ENCODE measurements at regions of chr9 and their contacts with region 1.

Region 1: GRCh38 chr9:90870621-90871326 is 69.2 kb downstream of the SYK start:
- DNase-seq: no peak
- H3K4me3 ChIP-seq: no peak overlapping the region
- H3K27ac ChIP-seq: no peak overlapping the region
- H3K4me1 ChIP-seq: no peaks in the 10 kb centered on the region
- H3K27me3 ChIP-seq: no peaks in the 10 kb centered on the region
- CTCF ChIP-seq: peak; percentile 89

Region 2: DNA sequence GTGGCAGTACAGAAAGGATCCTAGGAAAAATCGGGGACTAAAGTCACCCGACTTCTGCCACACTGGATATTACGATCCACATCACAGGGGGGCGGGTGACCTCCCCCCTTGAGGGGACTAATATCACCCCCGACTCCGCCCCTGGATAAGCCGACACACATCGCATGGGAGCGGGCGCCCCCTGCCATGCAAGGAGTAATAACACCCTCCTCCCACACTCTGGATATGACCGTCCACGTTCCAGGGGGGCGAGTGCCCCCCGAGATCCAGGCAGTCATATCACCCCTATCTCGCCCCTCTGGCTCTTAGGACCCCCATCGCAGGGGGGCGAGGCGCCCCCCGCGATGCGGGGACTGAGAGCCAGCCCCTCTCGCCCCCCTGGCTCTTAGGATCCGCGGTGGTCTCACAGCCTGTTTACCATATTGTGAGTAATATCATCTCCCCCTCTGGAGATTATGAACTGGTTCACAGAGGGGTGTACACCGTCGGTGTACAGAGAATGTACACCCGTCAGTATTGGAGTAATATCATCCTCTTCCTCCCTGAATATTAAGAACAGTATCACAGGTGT is 651.1 kb before region 1 on chr9:
- intact Hi-C with region 1: loop called (anchors 10 kb)
- DNase-seq: no peak
- H3K4me3 ChIP-seq: no peak overlapping the region
- H3K27ac ChIP-seq: no peak overlapping the region
- H3K4me1 ChIP-seq: no peaks in the 10 kb centered on the region
- H3K27me3 ChIP-seq: peaks cover 24% of the 10 kb centered on the region
- CTCF ChIP-seq: peak; percentile 55

Region 3: DNA sequence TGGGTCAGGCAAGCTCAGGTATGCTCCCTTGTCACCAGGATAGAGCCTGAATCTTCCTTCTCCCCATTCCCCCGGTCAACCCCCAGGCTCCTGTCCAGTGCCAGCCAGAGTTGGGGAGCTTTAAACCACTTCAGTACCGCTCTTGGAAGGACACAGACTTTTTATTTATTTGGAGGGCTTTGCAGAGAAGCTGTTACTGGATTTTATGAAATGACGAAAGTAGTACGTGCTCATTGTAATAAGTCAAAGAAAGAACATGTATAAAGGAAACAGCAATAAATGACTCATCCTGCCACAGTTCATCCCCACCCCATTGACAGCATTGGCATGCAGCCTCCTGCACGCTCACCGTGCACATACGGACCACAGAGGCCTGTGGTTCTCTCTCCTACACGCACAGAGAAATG is 260.7 kb after region 1 on chr9:
- intact Hi-C with region 1: no loop called
- DNase-seq: no peak
- H3K4me3 ChIP-seq: no peak overlapping the region
- H3K27ac ChIP-seq: no peak overlapping the region
- H3K4me1 ChIP-seq: no peaks in the 10 kb centered on the region
- H3K27me3 ChIP-seq: no peaks in the 10 kb centered on the region
- CTCF ChIP-seq: no peak

Measured in left ventricle myocardium inferior (tissue), 1 donor.